ENCODE measurements at regions of chr2 and their contacts with region 1.

Region 1: GRCh38 chr2:241686649-241687425 is at the start of gene DTYMK:
- DNase-seq: peak; percentile 98 to 99
- ATAC-seq: peak; percentile 99
- H3K4me3 ChIP-seq: peak within 1 kb of the TSS; percentile 49 to 82
- H3K27ac ChIP-seq: peak within 1 kb of the TSS in 1 of 2 donors; percentile 76
- H3K4me1 ChIP-seq: no peaks in the 10 kb centered on the region
- H3K27me3 ChIP-seq: no peaks in the 10 kb centered on the region
- total RNA-seq, gene DTYMK: 8.4 to 18.5 TPM

Region 2: DNA sequence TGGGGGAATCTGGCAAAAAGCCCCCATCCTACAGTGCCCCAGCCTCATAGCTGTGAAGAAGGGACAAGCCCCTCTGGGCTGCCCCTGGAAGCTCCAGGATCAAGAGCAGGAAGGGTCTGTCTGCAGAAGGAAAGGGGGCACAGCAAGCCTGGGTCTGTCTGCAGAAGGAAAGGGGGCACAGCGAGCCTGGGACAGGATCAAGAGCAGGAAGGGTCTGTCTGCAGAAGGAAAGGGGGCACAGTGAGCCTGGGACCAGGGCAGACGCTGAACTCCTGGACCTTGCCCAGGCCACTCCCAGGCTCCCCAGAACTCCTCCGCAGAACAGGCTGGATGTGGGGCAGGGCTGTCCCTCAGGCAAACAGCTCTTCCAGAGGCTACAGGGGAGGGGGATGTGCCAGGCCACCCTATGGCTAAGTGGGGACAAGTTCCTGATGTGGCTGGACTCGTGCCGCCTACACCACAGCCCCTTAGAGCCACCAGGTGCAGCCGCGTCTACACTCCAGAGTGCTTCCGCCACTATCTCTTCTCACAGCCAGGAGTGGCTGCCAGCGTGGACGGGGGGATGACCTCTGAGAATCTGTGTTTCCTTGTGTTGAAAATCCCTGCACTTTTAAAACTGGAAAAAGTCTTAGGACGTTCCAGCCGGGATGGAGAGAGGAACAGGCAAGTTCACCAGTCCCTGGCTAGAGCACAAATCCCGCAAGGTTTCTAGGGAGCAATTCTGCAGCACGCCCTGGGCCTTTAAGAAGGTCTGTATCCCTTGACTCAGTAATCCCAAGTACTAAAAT is 887.6 kb before region 1 on chr2:
- intact Hi-C with region 1: no loop called
- DNase-seq: peak; percentile 22 to 68
- ATAC-seq: peak; percentile 12
- H3K4me3 ChIP-seq: no peak overlapping the region
- H3K27ac ChIP-seq: no peak overlapping the region
- H3K4me1 ChIP-seq: no peaks in the 10 kb centered on the region
- H3K27me3 ChIP-seq: no peaks in the 10 kb centered on the region

Region 3: GRCh38 chr2:241701399-241702131 is 14.7 kb after region 1 on chr2 and contains the start of gene ING5:
- intact Hi-C with region 1: loop called in 1 of 2 experiments (anchors 1 kb)
- DNase-seq: peak; percentile 97 to 99
- ATAC-seq: peak; percentile 93
- H3K4me3 ChIP-seq: peak within 1 kb of the TSS; percentile 75 to 84
- H3K27ac ChIP-seq: peak within 1 kb of the TSS; percentile 67 to 80
- H3K4me1 ChIP-seq: no peaks in the 10 kb centered on the region
- H3K27me3 ChIP-seq: no peaks in the 10 kb centered on the region
- total RNA-seq, gene ING5: 30.7 to 31.7 TPM

Region 4: GRCh38 chr2:242046206-242046826 is 359.5 kb after region 1 on chr2:
- intact Hi-C with region 1: no loop called
- DNase-seq: peak in 1 of 2 donors; percentile 6
- ATAC-seq: no peak
- H3K4me3 ChIP-seq: no peak overlapping the region
- H3K27ac ChIP-seq: no peak overlapping the region
- H3K4me1 ChIP-seq: no peaks in the 10 kb centered on the region
- H3K27me3 ChIP-seq: no peaks in the 10 kb centered on the region

Measured in aorta (tissue), 5 donors.